ENCODE measurements at regions of chr3 and their contacts with region 1.

Region 1: DNA sequence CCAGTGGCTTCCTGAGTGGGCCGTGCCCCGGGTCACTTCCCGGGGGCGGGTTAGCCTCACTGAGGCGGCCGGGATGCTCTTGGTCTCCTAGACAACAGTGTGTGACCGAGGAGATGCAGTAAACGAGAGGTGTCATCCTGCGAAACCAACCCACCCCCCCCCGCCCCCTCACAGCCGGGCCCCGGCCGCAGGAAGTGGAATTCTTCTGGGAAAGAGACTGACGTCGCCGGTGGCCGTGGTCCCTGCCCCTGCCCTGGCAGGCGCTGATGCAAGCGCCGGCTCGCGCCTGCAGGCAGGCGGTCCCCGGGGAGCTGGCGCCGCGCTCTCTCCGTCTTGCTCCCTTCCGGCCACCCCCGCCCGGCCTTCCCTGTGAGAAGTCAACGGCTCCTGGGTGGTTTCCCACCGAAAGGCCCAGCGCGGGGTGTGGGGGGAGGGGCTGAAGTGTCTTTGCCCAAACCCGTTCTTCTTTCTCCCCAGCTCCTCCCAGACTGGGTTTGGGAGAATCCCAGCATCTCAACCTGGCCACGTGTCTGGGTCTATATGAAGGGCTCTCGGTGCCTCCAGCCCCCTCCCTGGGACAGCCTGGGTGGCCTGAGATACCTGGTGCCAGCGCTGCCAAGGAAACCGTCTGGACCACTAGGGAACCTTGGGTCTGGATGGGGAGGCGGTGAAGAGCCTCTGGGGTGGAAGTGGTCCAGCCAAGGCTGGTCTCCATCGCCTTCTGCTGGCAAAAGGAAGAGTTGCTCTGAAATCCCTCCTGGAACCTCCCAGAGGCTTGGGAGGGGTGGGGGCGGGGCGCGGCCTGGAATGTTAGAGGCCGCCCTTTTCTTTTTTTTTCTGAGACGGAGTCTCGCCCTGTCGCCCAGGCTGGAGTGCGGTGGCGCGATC is 47.3 kb downstream of the BHLHE40 start:
- DNase-seq: peak; percentile 94

Region 2: DNA sequence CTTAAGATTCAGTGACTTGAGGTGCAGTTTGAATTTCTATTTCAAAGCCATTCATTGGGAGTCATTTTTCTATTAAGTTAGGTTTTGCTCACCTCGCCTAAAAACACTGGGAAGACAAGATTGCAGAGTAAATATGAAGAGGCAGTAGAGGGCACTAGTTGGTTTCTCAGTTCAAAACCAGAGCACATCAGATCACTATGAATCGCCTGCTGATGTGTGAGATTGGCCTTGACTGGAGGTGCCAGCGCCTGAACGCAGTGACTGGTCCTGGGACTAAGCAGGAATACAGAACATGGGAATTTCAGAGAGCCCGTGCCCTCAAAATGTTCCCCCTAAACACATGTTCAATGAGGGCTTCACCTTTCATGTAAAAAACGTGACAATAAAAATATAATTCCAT is 304.5 kb before region 1 on chr3:
- intact Hi-C with region 1: loop called (anchors 1 kb)
- DNase-seq: no peak

Region 3: GRCh38 chr3:4986782-4987537 is 39.6 kb before region 1 on chr3:
- intact Hi-C with region 1: loop called (anchors 1 kb)
- DNase-seq: peak; percentile 99

Region 4: DNA sequence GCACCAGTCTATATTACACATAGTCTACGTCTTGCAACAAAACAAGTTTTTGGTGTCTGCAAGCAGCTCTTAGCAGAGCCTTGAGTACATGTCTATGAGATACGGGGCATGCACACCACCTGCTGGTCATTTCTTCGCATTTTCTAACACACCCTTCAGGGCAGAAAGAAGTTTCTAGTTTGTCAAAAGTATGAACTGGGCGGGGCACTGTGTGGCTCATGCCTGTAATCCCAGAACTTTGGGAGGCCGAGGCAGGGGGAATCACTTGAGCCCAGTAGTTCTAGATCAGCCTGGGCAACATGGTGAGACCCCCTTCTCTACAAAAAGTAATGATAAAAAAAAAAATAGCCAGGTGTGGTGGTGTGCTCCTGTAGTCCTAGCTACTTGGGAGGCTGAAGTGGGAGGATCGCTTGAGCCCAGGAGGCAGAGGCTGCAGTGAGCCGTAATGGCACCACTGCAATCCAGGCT is 31.3 kb after region 1 on chr3:
- intact Hi-C with region 1: loop called (anchors 2 kb)
- DNase-seq: peak; percentile 85

Region 5: DNA sequence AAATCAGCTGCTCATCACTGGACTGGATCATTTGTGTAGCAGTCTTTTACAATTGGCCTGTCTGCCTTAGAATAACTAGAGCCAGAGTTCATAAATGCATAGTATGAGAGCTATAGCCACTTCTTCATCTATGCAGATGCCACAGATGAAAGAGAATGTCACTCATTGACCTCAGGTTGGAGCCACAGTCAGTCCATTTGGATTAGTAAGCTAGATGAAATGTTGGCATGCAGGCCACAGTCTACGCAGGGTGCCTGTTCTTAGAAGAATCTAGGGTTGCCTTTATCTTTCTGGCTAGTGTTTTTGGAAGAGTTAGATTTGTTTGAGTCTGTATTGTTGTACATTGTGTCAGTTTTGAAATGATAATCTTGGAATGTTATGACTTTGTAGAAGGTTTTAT is 135.5 kb after region 1 on chr3:
- intact Hi-C with region 1: no loop called
- DNase-seq: no peak